ENCODE measurements at regions of chrX and their contacts with region 1.

Region 1: GRCh38 chrX:21985332-21985777 is 44.8 kb downstream of the SMS start:
- DNase-seq: peak; percentile 82
- ATAC-seq: peak; percentile 97
- H3K4me3 ChIP-seq: no peak overlapping the region
- H3K27ac ChIP-seq: no peak overlapping the region
- H3K4me1 ChIP-seq: 0 out of 2 replicates have a peak, but pooled peaks cover 2% of the 10 kb centered on the region
- H3K27me3 ChIP-seq: no peaks in the 10 kb centered on the region
- CTCF ChIP-seq: peak; percentile 99
- POLR2A ChIP-seq: no peak
- RAD21 ChIP-seq: peak; percentile 86

Region 2: DNA sequence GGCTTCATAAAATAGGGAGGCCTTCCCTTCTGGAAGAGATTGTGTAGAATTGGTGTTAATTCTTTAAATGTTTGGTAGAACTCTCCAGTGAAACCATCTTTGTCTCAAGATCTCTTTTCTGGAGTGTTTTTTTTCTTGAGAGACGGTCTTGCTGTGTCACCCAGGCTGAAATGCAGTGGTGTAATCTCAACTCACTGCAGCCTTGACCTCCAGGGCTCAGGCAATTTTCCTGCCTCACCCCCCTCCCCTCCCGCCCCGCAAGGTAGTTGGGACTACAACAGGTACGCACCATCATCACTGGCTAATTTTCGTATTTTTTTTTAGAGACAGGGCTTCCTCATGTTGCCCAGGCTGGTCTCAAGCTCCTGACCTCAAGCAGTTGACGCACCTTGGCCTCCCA is 32.7 kb before region 1 on chrX:
- CTCF ChIA-PET with region 1: no interaction called
- POLR2A ChIA-PET with region 1: no interaction called
- dilution Hi-C with region 1: no loop called
- in situ Hi-C with region 1: no loop called
- intact Hi-C with region 1: no loop called
- DNase-seq: no peak
- ATAC-seq: no peak
- H3K4me3 ChIP-seq: no peak overlapping the region
- H3K27ac ChIP-seq: no peak overlapping the region
- H3K4me1 ChIP-seq: no peaks in the 10 kb centered on the region; the same call in none of the 2 replicates
- H3K27me3 ChIP-seq: peaks cover 4% of the 10 kb centered on the region; the same call in 1 of the 2 replicates
- CTCF ChIP-seq: no peak
- POLR2A ChIP-seq: no peak
- RAD21 ChIP-seq: no peak

Region 3: GRCh38 chrX:21996872-21997271 is 11.5 kb after region 1 on chrX:
- CTCF ChIA-PET with region 1: interaction called, 11 read pairs
- POLR2A ChIA-PET with region 1: no interaction called
- dilution Hi-C with region 1: no loop called
- in situ Hi-C with region 1: no loop called
- intact Hi-C with region 1: no loop called
- DNase-seq: peak; percentile 84
- ATAC-seq: peak; percentile 71
- H3K4me3 ChIP-seq: no peak overlapping the region
- H3K27ac ChIP-seq: peak overlapping the region; percentile 67; the same call in 1 of the 2 replicates
- H3K4me1 ChIP-seq: 0 out of 2 replicates have a peak, but pooled peaks cover 3% of the 10 kb centered on the region
- H3K27me3 ChIP-seq: no peaks in the 10 kb centered on the region
- CTCF ChIP-seq: no peak
- POLR2A ChIP-seq: no peak
- RAD21 ChIP-seq: no peak

Region 4: GRCh38 chrX:22268706-22269105 is 283.4 kb after region 1 on chrX:
- CTCF ChIA-PET with region 1: no interaction called
- POLR2A ChIA-PET with region 1: no interaction called
- dilution Hi-C with region 1: no loop called
- in situ Hi-C with region 1: no loop called
- intact Hi-C with region 1: no loop called
- DNase-seq: no peak
- ATAC-seq: no peak
- H3K4me3 ChIP-seq: no peak overlapping the region
- H3K27ac ChIP-seq: no peak overlapping the region
- H3K4me1 ChIP-seq: no peaks in the 10 kb centered on the region
- H3K27me3 ChIP-seq: no peaks in the 10 kb centered on the region
- CTCF ChIP-seq: no peak
- POLR2A ChIP-seq: no peak
- RAD21 ChIP-seq: no peak

Region 5: DNA sequence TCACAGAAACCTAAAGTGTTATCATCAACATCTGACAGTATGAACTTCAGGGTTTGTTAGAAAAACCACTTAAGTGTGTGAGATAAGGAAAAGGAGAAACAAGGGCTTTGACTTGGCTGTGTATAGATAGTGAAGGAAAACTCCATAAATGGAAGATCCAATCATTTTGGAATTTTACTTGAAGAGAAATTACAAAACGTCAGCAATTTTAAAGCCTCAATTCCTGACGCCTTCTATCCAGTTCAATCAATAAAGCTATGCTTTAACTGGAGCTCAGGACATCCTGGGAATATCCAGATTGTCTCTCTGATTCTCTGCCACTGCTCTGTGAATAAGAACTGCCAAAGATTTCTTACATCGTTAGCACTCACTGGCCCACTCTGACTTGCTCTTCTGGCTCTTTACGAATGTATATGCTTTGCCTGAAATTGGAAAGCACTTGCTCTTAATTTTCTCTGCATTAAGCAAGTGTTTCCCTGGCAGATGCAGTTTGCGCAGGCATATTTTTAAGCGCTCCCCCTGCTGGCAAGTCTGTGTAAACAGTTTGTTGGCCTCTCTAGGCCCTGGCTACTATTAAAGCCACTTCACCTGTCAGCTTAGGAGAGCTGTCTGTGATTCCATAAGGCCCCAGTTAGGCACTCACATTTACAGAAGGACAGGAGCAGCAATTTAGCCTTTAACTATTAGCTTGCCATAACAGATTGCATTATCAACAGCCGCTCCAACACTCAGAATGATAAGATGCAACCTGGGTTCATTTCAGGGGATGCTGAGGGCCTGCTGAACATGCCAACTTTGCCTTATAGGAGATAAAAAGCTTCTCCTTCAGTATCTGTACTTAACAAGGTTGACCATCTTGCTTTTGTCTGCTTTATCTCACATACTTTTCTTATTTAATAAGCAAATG is 763.0 kb after region 1 on chrX:
- CTCF ChIA-PET with region 1: interaction called, 4 read pairs
- POLR2A ChIA-PET with region 1: no interaction called
- dilution Hi-C with region 1: no loop called
- in situ Hi-C with region 1: no loop called
- intact Hi-C with region 1: loop called (anchors 2 kb)
- DNase-seq: peak; percentile 47
- ATAC-seq: peak; percentile 61; the same call in 1 of the 2 replicates
- H3K4me3 ChIP-seq: no peak overlapping the region
- H3K27ac ChIP-seq: no peak overlapping the region
- H3K4me1 ChIP-seq: peaks cover 2% of the 10 kb centered on the region; the same call in 1 of the 2 replicates
- H3K27me3 ChIP-seq: no peaks in the 10 kb centered on the region
- CTCF ChIP-seq: peak; percentile 63
- POLR2A ChIP-seq: no peak
- RAD21 ChIP-seq: peak; percentile 62

Region 6: DNA sequence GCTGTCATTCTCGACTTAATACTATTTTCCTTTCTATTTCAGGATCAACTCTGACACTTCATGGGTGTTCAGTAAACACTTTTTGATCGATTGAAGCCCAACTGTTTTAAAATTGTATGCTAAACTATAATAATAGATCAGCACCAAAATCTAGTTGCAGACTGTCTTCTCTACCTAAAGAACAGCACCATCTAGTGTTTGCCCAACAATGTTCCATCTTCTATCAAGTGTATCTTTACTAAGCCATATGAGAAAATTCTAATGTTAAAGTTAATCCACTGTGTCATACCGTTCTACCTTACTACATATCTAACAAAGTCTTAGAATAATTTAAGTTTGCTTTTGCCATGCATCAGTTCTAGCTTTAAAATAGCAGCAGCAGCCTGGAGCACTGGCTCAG is 1568.9 kb after region 1 on chrX:
- CTCF ChIA-PET with region 1: interaction called, 3 read pairs
- POLR2A ChIA-PET with region 1: no interaction called
- dilution Hi-C with region 1: no loop called
- in situ Hi-C with region 1: no loop called
- intact Hi-C with region 1: loop called (anchors 2 kb)
- DNase-seq: peak; percentile 50
- ATAC-seq: 0 out of 2 replicates have a peak, but pooled peaks have one; percentile 40
- H3K4me3 ChIP-seq: no peak overlapping the region
- H3K27ac ChIP-seq: no peak overlapping the region
- H3K4me1 ChIP-seq: no peaks in the 10 kb centered on the region
- H3K27me3 ChIP-seq: no peaks in the 10 kb centered on the region
- CTCF ChIP-seq: peak; percentile 57
- POLR2A ChIP-seq: no peak
- RAD21 ChIP-seq: peak; percentile 53

Region 7: DNA sequence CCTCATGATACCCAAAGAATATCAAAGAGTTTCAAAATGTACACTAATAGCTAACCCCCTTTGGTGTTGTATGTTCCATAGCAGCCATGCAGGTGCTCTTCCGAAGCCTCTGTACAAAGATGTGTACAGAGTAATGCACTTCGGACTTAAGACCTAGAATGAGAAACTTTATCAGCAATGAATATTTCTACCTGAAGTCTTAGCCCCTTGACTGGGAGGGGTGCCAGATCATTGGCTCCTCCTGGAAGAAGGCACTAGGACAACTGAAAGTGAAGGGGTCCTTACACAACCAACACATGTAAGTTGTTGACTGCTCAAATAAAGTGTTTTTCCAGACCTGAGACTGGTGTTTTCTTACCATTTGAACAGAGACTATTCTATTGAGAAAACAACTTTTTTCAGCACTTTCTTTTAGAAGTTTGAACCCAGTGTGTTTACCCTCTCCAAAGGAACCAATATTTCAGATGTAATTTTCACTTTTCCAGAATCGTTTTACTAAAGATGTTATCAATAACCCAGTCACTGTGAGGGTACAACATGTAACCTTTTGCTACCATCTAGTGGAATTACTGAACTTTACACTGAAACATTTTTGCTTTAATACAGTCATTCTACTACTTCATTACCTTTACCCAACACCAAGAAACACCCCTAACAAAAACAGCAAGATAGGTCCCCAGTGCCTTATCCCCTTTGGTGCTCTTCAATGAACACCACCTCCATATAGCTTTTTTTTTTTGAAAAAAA is 1648.7 kb after region 1 on chrX:
- CTCF ChIA-PET with region 1: no interaction called
- POLR2A ChIA-PET with region 1: no interaction called
- dilution Hi-C with region 1: no loop called
- in situ Hi-C with region 1: no loop called
- intact Hi-C with region 1: loop called (anchors 1 kb)
- DNase-seq: no peak
- ATAC-seq: no peak
- H3K4me3 ChIP-seq: no peak overlapping the region
- H3K27ac ChIP-seq: no peak overlapping the region
- H3K4me1 ChIP-seq: no peaks in the 10 kb centered on the region
- H3K27me3 ChIP-seq: peaks cover 2% of the 10 kb centered on the region; the same call in 1 of the 2 replicates
- CTCF ChIP-seq: 0 out of 2 replicates have a peak, but pooled peaks have one; percentile 23
- POLR2A ChIP-seq: no peak
- RAD21 ChIP-seq: peak; percentile 32; the same call in 1 of the 2 replicates

Measured in IMR-90 (cell line).